Posterior vena cava (tissue), 2 donors: ENCODE measurements at regions of chr11 and their contacts with region 1.

Region 1: DNA sequence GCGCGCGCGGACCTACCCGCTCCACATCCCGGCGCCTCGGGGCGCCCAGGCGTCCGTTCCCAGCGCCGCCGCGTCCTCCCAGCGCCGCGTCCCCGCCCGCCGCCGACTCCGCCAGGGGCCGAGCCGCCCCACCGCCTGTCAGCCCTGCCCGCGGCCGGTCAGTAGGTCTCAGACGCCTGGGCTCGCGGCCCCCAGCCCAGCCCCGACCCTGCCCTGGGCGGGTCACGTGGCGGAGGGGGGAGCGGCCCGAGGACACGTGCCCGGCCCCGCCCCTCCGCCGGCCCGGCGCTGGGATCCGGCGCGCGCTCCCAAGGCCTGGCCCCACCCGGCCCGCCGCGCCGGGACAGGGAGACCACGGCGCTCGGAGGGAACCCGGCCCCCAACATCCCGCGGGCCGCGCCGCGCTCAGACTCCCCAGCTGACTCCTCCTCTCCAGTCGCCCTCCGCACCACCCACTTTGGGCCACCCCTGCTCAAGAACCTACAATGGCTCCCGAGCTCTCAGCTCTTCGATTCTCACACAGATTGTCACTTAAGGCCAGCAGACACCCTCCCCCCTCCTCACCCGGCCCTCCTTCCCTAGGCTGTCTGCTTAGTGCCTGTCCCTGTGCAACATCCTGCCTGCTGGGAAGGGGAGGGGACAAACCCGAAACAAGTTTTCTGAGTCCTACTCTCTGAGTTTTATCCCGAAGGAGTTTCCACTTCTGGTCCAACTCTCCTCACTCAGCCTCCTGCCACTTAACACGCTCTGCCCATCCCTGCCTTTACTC is at the start of gene RAB3IL1:
- DNase-seq: peak; percentile 93
- total RNA-seq, gene RAB3IL1: 26.7 to 31.5 TPM

Region 2: GRCh38 chr11:61954851-61955421 is 37.4 kb after region 1 on chr11:
- intact Hi-C with region 1: no loop called
- DNase-seq: peak; percentile 92

Region 3: DNA sequence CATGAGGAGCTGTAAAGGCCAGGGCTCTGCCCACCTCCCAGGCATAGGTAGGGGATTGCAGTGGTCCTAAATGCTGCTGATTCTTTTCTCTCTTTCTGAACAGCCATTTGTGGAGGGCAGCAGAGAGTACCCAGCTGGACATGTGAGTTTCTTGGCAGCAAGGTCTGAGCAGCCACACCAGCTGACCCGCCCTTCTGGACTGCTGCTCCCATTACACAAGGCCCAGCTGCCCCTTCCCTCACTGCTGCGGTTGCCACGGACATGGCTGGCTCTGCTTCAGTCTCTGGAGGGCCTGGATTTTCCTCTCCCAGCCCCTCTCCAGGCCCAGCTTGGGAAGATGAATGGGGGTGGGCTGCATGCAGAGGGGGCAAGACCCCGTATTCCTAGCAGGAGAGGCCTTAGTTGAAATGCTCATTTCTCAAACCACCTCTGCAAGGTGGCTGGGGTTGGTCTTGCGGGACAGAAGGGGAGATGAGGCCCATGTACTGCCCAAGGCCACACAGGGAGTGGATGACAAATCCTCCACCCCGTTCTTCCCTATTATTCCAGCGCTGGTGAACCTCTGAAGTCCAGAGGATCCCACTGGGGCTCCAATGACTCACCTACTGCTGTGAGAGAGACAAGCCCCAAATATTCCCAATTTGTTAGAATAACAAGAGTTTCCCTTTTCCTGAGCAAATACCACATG is 1593.0 kb after region 1 on chr11:
- intact Hi-C with region 1: loop called in 1 of 2 experiments (anchors 5 kb)
- DNase-seq: no peak